CD4-positive, alpha-beta memory T cell (primary cell): ENCODE measurements at regions of chr12 and their contacts with region 1.

Region 1: DNA sequence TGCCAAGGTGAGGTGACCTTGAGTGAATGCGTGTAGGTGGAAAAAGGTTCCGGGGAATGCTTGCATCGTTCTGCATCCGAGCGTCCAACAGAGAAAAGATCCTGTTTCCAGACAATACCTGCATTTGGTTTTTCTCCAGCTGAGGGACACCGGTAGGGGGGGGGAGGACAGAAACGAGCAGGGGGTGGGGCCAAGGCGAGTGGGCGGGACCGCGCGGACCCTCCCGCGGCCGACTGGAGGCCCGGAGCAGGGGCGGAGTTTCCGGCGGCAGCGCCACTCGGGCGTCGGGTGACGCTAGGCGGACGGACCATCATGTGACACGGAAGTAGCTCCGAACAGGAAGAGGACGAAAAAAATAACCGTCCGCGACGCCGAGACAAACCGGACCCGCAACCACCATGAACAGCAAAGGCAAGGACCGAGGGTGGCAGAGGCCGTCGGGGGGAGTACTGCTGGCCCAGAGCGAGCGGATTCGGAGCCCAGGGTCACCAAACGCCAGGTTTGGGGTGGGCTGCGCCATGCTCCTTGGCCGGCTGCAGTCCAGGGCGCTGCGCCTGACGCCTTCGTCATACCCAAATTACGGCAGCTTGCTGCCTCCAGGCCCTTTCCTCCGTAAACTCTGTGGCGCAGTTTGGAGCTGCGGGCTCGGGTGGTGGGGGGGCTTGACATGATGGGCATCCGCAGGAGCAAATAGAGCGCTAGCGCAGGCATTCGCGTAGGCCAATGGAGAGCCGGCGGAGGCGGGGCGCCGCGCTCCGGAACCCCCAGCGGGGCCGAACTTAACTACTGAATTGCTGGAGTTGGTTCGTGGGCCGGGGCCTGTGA is at the start of gene DAZAP2:
- DNase-seq: peak; percentile 91 to 95 (median 94)
- H3K4me3 ChIP-seq: peak within 1 kb of the TSS; percentile 98 to 100
- H3K4me3 Mint-ChIP-seq: peak within 1 kb of the TSS; percentile 93 to 99 (median 98)
- H3K27ac ChIP-seq: peak within 1 kb of the TSS; percentile 100
- H3K27ac Mint-ChIP-seq: peak within 1 kb of the TSS; percentile 99 to 100 (median 100)
- H3K4me1 ChIP-seq: peaks cover 40% of the 10 kb centered on the region
- H3K4me1 Mint-ChIP-seq: peaks cover 27 to 57% (median 40%) of the 10 kb centered on the region in 4 donors
- H3K27me3 ChIP-seq: no peaks in the 10 kb centered on the region
- H3K27me3 Mint-ChIP-seq: peaks cover 0 to 1% of the 10 kb centered on the region in 2 donors
- total RNA-seq, gene DAZAP2: 275 to 286 TPM

Region 2: GRCh38 chr12:51083126-51083833 is 155.4 kb before region 1 on chr12 and contains the start of gene CSRNP2:
- CTCF ChIA-PET with region 1: no interaction called
- POLR2A ChIA-PET with region 1: interaction called, 18 read pairs
- intact Hi-C with region 1: loop called (anchors 1 kb)
- DNase-seq: peak; percentile 94 to 96 (median 95)
- H3K4me3 ChIP-seq: peak within 1 kb of the TSS; percentile 67 to 93
- H3K4me3 Mint-ChIP-seq: peak within 1 kb of the TSS; percentile 93 to 98 (median 96)
- H3K27ac ChIP-seq: peak within 1 kb of the TSS; percentile 86
- H3K27ac Mint-ChIP-seq: peak within 1 kb of the TSS; percentile 88 to 97 (median 95)
- H3K4me1 ChIP-seq: peaks cover 21% of the 10 kb centered on the region
- H3K4me1 Mint-ChIP-seq: peaks cover 28 to 45% (median 36%) of the 10 kb centered on the region in 4 donors
- H3K27me3 ChIP-seq: no peaks in the 10 kb centered on the region
- H3K27me3 Mint-ChIP-seq: no peaks in the 10 kb centered on the region
- total RNA-seq, gene CSRNP2: 34.1 to 35.0 TPM

Region 3: GRCh38 chr12:51217968-51218606 is 20.6 kb before region 1 on chr12 and contains the start of gene POU6F1:
- CTCF ChIA-PET with region 1: interaction called, 10 read pairs
- POLR2A ChIA-PET with region 1: interaction called, 177 read pairs
- intact Hi-C with region 1: loop called (anchors 1 kb)
- DNase-seq: peak; percentile 76 to 82 (median 80)
- H3K4me3 ChIP-seq: peak within 1 kb of the TSS; percentile 90 to 99
- H3K4me3 Mint-ChIP-seq: peak within 1 kb of the TSS; percentile 90 to 96 (median 94)
- H3K27ac ChIP-seq: peak within 1 kb of the TSS; percentile 91
- H3K27ac Mint-ChIP-seq: peak within 1 kb of the TSS; percentile 94 to 99 (median 97)
- H3K4me1 ChIP-seq: peaks cover 25% of the 10 kb centered on the region
- H3K4me1 Mint-ChIP-seq: peaks cover 19 to 39% (median 29%) of the 10 kb centered on the region in 4 donors
- H3K27me3 ChIP-seq: no peaks in the 10 kb centered on the region
- H3K27me3 Mint-ChIP-seq: no peaks in the 10 kb centered on the region
- total RNA-seq, gene POU6F1: 71.9 to 79.8 TPM

Region 4: DNA sequence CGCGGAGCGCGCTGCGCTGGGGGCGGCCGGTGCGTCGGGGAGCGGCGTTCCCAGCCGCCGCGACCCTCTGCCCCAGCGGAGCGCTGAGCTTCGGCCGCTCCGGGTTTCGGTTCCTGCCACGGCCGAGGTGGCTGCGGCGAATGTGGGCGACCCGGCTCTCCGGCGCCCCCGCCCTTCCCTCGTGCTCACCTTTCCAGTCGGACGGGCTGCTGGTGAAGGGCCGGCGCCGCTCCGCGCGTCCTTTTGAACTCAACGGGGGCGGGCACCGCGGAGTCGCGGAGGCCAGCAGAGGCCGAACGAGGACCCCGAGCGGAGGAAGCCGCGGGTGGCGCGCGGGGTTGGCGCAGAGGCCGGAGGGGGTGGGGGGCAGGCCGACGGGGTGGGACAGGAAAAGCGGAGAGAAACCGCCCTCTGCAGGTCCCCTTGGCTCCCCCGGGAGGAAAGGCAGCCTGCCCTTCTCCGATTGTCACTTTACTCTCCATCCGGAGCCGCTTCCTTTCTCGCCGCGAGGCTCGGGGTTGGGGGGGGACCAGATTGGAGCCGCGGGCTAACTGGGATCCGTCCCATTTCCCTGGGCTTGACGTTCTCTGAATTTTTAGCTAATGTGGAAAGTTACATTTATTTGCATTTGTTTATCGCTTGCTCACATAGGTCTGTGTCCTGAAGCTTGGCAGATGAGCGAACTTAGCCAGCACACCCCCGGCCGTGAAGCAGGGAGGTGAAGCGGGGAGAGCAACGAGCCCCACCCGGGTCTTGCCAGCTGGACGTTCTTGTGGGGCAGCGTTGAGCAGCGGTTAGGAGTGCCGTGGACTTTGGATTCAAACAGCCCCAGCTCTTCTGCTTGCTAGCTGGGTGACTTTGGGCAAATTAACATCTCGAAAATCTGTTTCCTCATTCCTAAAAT is 31.6 kb after region 1 on chr12 and contains the start of gene SMAGP:
- CTCF ChIA-PET with region 1: interaction called, 5 read pairs
- POLR2A ChIA-PET with region 1: interaction called, 24 read pairs
- intact Hi-C with region 1: no loop called
- DNase-seq: peak; percentile 36 to 51 (median 38)
- H3K4me3 ChIP-seq: peak within 1 kb of the TSS; percentile 3 to 57
- H3K4me3 Mint-ChIP-seq: peak within 1 kb of the TSS; percentile 88 to 97 (median 96)
- H3K27ac ChIP-seq: peak within 1 kb of the TSS; percentile 2
- H3K27ac Mint-ChIP-seq: peak within 1 kb of the TSS; percentile 80 to 95 (median 90)
- H3K4me1 ChIP-seq: peaks cover 20% of the 10 kb centered on the region
- H3K4me1 Mint-ChIP-seq: peaks cover 19 to 38% (median 24%) of the 10 kb centered on the region in 4 donors
- H3K27me3 ChIP-seq: no peaks in the 10 kb centered on the region
- H3K27me3 Mint-ChIP-seq: no peaks in the 10 kb centered on the region
- total RNA-seq, gene SMAGP: 3.9 to 5.5 TPM

Region 5: GRCh38 chr12:51326762-51327439 is 88.2 kb after region 1 on chr12:
- CTCF ChIA-PET with region 1: no interaction called
- POLR2A ChIA-PET with region 1: interaction called, 16 read pairs
- intact Hi-C with region 1: no loop called
- DNase-seq: no peak
- H3K4me3 ChIP-seq: no peak overlapping the region
- H3K4me3 Mint-ChIP-seq: peak overlapping the region in 7 of 8 donors; percentile 40 to 74 (median 64)
- H3K27ac ChIP-seq: peak overlapping the region; percentile 27
- H3K27ac Mint-ChIP-seq: peak overlapping the region; percentile 77 to 98 (median 94)
- H3K4me1 ChIP-seq: peaks cover 65% of the 10 kb centered on the region
- H3K4me1 Mint-ChIP-seq: peaks cover 51 to 91% (median 71%) of the 10 kb centered on the region in 4 donors
- H3K27me3 ChIP-seq: no peaks in the 10 kb centered on the region
- H3K27me3 Mint-ChIP-seq: no peaks in the 10 kb centered on the region